B cell (primary cell): ENCODE measurements at regions of chr3 and their contacts with region 1.

Region 1: DNA sequence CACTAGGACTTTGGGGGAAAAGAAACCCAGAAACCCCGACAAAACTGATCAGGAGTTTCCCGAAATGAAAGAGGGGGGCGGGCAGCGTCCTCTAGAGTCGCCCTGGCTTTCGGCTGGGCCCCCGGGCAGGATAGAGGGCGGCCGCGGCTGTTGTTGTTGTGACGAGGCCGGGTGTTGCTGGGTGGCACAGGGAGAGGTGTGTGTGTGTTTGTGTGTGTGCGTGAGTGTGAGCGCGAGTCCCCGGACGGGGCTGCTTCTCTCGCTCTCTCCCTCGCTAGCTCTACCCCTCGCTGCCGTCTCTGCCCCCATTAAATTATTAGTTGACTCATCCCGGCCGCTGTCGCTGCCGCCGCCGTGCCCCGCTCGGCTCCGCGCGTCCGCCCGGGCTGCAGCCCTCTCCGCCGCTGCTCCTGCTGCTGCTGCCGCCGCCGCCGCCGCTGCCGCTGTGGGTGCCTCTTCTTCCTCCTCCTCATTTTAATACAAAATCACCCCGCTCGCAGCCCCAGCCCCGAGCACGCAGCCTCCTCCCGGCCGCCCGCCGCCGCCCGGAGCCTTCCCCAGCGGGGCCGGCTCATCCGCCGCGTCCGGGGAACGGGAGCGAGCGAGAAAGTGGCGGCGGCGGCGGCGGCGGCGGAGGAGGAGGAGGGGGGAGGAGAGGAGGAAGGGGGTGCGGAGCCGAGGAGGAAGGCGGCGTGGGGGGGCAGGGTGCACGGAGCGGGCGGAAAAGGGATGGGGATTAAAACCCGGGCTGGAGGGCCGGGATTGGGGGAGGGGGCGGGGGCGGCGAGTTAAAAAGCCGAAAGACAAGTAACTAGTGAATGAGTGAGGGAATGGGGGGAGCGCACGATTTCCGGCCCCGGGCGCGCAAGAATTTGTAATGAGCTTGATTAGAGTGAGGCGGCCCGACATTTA is at the start of gene SATB1:
- DNase-seq: peak; percentile 80
- ATAC-seq: peak; percentile 53
- H3K4me3 ChIP-seq: peak within 1 kb of the TSS; percentile 68 to 93 (median 86)
- H3K4me3 Mint-ChIP-seq: peak within 1 kb of the TSS; percentile 87
- H3K27ac ChIP-seq: peak within 1 kb of the TSS; percentile 78 to 86
- H3K27ac Mint-ChIP-seq: peak within 1 kb of the TSS; percentile 94
- H3K4me1 ChIP-seq: peaks cover 21 to 22% of the 10 kb centered on the region in 2 donors
- H3K4me1 Mint-ChIP-seq: peaks cover 35% of the 10 kb centered on the region
- H3K27me3 ChIP-seq: no peaks in the 10 kb centered on the region
- H3K27me3 Mint-ChIP-seq: no peaks in the 10 kb centered on the region
- CTCF ChIP-seq: no peak
- total RNA-seq, gene SATB1: 56.1 and 66.5 TPM in 2 replicates

Region 2: DNA sequence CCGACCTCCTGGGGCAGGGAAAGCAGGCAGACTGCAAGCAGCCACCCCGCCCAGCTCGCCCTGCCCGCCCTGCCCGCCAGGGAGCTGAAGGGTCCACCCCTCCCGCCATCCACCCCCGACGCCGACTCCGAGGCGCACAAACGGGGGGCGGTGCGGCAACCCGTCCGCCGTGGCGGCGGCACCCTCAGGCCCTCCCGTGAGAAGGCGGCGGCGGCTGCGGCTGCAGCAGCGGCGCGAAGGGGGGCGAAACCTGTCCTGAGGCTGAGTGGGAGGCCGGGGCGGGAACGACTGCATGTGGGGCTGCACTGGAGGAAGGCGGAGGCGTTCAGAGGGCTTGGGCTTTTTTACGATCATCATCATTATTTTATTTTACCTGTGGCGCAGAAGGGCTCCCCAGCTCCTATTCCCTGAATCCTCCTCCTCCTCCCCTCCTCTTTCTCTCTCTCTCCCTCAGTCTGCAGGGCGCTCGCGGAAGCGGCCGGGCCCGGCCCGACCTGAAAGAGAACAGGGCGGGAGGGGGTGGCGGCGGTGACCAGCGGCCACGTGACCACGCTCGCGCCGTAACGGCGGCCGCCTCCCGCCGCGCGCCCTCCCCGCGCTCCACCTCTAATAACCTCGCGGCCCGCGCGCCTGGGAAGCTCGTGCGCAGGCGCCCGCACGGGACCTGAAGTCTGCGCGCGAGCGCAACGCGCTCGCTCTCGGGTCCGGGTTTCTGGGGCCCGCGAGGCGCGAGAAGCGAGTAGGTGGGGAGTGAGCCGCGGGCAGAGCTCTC is 682.7 kb before region 1 on chr3 and contains the start of gene TBC1D5:
- CTCF ChIA-PET with region 1: no interaction called
- POLR2A ChIA-PET with region 1: interaction called, 3 read pairs
- intact Hi-C with region 1: loop called (anchors 2 kb)
- DNase-seq: peak; percentile 97
- ATAC-seq: peak; percentile 85
- H3K4me3 ChIP-seq: peak within 1 kb of the TSS; percentile 81 to 84 (median 83)
- H3K4me3 Mint-ChIP-seq: peak within 1 kb of the TSS; percentile 96
- H3K27ac ChIP-seq: peak within 1 kb of the TSS; percentile 89 to 93
- H3K27ac Mint-ChIP-seq: peak within 1 kb of the TSS; percentile 98
- H3K4me1 ChIP-seq: peaks cover 43 to 49% of the 10 kb centered on the region in 2 donors
- H3K4me1 Mint-ChIP-seq: peaks cover 65% of the 10 kb centered on the region
- H3K27me3 ChIP-seq: no peaks in the 10 kb centered on the region
- H3K27me3 Mint-ChIP-seq: no peaks in the 10 kb centered on the region
- CTCF ChIP-seq: no peak
- total RNA-seq, gene TBC1D5: 111 and 112 TPM in 2 replicates

Region 3: GRCh38 chr3:18223573-18223972 is 201.4 kb before region 1 on chr3:
- CTCF ChIA-PET with region 1: no interaction called
- POLR2A ChIA-PET with region 1: no interaction called
- intact Hi-C with region 1: loop called (anchors 10 kb)
- DNase-seq: peak; percentile 84
- ATAC-seq: peak; percentile 89
- H3K4me3 ChIP-seq: peak overlapping the region; percentile 16 to 56 (median 38)
- H3K4me3 Mint-ChIP-seq: peak overlapping the region; percentile 75
- H3K27ac ChIP-seq: peak overlapping the region; percentile 50 to 67
- H3K27ac Mint-ChIP-seq: peak overlapping the region; percentile 82
- H3K4me1 ChIP-seq: peaks cover 56 to 70% of the 10 kb centered on the region in 2 donors
- H3K4me1 Mint-ChIP-seq: peaks cover 69% of the 10 kb centered on the region
- H3K27me3 ChIP-seq: no peaks in the 10 kb centered on the region
- H3K27me3 Mint-ChIP-seq: no peaks in the 10 kb centered on the region
- CTCF ChIP-seq: no peak

Region 4: GRCh38 chr3:18411541-18411940 is 13.4 kb before region 1 on chr3:
- CTCF ChIA-PET with region 1: no interaction called
- POLR2A ChIA-PET with region 1: no interaction called
- intact Hi-C with region 1: no loop called
- DNase-seq: no peak
- ATAC-seq: no peak
- H3K4me3 ChIP-seq: no peak overlapping the region
- H3K4me3 Mint-ChIP-seq: no peak overlapping the region
- H3K27ac ChIP-seq: no peak overlapping the region
- H3K27ac Mint-ChIP-seq: no peak overlapping the region
- H3K4me1 ChIP-seq: no peaks in the 10 kb centered on the region
- H3K4me1 Mint-ChIP-seq: no peaks in the 10 kb centered on the region
- H3K27me3 ChIP-seq: no peaks in the 10 kb centered on the region
- H3K27me3 Mint-ChIP-seq: no peaks in the 10 kb centered on the region
- CTCF ChIP-seq: no peak

Region 5: DNA sequence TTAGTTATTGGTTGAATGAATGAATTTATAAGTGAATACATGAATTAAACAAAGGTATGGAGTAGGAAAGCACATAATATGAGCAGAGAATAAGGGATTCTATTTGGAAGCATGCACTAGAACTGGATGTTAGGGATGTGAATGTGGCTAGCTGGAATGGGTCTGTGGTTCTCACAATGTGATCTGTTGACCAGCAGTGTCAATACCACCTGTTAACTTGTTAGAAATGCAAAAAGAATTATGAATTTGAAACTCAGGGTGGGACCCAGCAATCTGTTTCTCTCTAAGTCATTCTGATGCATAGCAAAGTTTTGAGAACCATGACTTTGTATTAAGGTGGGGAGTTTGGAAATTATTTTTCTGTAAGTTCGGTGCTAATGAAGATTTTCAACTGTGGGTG is 41.2 kb after region 1 on chr3:
- CTCF ChIA-PET with region 1: no interaction called
- POLR2A ChIA-PET with region 1: no interaction called
- intact Hi-C with region 1: no loop called
- DNase-seq: no peak
- ATAC-seq: no peak
- H3K4me3 ChIP-seq: no peak overlapping the region
- H3K4me3 Mint-ChIP-seq: no peak overlapping the region
- H3K27ac ChIP-seq: no peak overlapping the region
- H3K27ac Mint-ChIP-seq: no peak overlapping the region
- H3K4me1 ChIP-seq: no peaks in the 10 kb centered on the region
- H3K4me1 Mint-ChIP-seq: no peaks in the 10 kb centered on the region
- H3K27me3 ChIP-seq: no peaks in the 10 kb centered on the region
- H3K27me3 Mint-ChIP-seq: no peaks in the 10 kb centered on the region
- CTCF ChIP-seq: no peak

Region 6: GRCh38 chr3:18499301-18499700 is 74.3 kb after region 1 on chr3:
- CTCF ChIA-PET with region 1: no interaction called
- POLR2A ChIA-PET with region 1: interaction called, 5 read pairs
- intact Hi-C with region 1: loop called (anchors 2 kb)
- DNase-seq: peak; percentile 83
- ATAC-seq: peak; percentile 99
- H3K4me3 ChIP-seq: peak overlapping the region in 2 of 5 experiments; percentile 4 to 43
- H3K4me3 Mint-ChIP-seq: peak overlapping the region; percentile 56
- H3K27ac ChIP-seq: peak overlapping the region; percentile 19 to 72
- H3K27ac Mint-ChIP-seq: peak overlapping the region; percentile 73
- H3K4me1 ChIP-seq: peaks cover 17 to 38% of the 10 kb centered on the region in 2 donors
- H3K4me1 Mint-ChIP-seq: peaks cover 41% of the 10 kb centered on the region
- H3K27me3 ChIP-seq: no peaks in the 10 kb centered on the region
- H3K27me3 Mint-ChIP-seq: no peaks in the 10 kb centered on the region
- CTCF ChIP-seq: no peak

Region 7: DNA sequence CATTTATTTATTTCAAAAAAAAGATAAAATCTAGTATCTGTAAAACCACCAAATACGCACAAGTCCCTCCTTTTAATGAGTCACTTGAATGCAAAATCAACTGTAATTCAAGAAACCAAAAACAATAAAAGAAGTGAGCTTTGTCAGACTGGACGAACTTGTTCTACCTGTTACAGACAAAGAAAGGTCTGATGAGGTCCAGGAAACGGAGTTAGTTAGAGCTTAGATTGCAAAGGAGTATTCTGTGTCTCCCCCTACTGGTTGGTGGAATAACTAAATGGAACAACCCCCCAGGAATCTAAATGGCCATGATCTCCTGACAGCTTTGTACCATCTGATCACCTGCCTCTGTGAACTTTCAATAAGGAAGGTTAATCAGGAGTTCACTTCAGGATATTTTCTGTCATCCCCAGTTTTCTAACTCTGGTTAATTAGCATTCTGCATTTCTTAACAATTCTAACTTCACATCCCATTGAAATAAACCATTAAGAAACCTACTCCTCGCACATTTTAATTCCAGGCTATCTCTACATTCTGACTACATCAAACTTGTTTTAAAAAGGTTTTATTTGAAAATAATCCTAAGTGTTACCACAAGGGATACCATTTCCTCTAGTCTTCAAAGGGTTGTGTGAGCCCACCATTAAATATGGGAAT is 333.2 kb after region 1 on chr3:
- CTCF ChIA-PET with region 1: interaction called, 5 read pairs
- POLR2A ChIA-PET with region 1: no interaction called
- intact Hi-C with region 1: loop called (anchors 5 kb)
- DNase-seq: peak; percentile 84
- ATAC-seq: peak; percentile 88
- H3K4me3 ChIP-seq: no peak overlapping the region
- H3K4me3 Mint-ChIP-seq: no peak overlapping the region
- H3K27ac ChIP-seq: no peak overlapping the region
- H3K27ac Mint-ChIP-seq: no peak overlapping the region
- H3K4me1 ChIP-seq: no peaks in the 10 kb centered on the region
- H3K4me1 Mint-ChIP-seq: no peaks in the 10 kb centered on the region
- H3K27me3 ChIP-seq: no peaks in the 10 kb centered on the region
- H3K27me3 Mint-ChIP-seq: no peaks in the 10 kb centered on the region
- CTCF ChIP-seq: peak; percentile 87

Region 8: GRCh38 chr3:19946832-19947548 is 1522.0 kb after region 1 on chr3 and contains the start of gene RAB5A:
- CTCF ChIA-PET with region 1: no interaction called
- POLR2A ChIA-PET with region 1: no interaction called
- intact Hi-C with region 1: loop called (anchors 10 kb)
- DNase-seq: peak; percentile 99
- ATAC-seq: peak; percentile 85
- H3K4me3 ChIP-seq: peak within 1 kb of the TSS; percentile 71 to 95 (median 87)
- H3K4me3 Mint-ChIP-seq: peak within 1 kb of the TSS; percentile 93
- H3K27ac ChIP-seq: peak within 1 kb of the TSS; percentile 96 to 98
- H3K27ac Mint-ChIP-seq: peak within 1 kb of the TSS; percentile 97
- H3K4me1 ChIP-seq: peaks cover 18 to 22% of the 10 kb centered on the region in 2 donors
- H3K4me1 Mint-ChIP-seq: peaks cover 47% of the 10 kb centered on the region
- H3K27me3 ChIP-seq: no peaks in the 10 kb centered on the region
- H3K27me3 Mint-ChIP-seq: no peaks in the 10 kb centered on the region
- CTCF ChIP-seq: no peak
- total RNA-seq, gene RAB5A: 59.4 and 61.9 TPM in 2 replicates